ENCODE measurements at regions of chr1 and their contacts with region 1.

Region 1: GRCh38 chr1:171801487-171801891 is 20.0 kb downstream of the METTL13 start:
- DNase-seq: peak; percentile 50 to 54
- ATAC-seq: peak; percentile 75 to 77; a peak in 5 of 6 replicates
- H3K4me3 ChIP-seq: no peak overlapping the region
- H3K27ac ChIP-seq: no peak overlapping the region
- H3K4me1 ChIP-seq: no peaks in the 10 kb centered on the region
- CTCF ChIP-seq: peak; percentile 94
- EP300 ChIP-seq: no peak
- POLR2A ChIP-seq: no peak
- RAD21 ChIP-seq: peak; percentile 84 to 92

Region 2: GRCh38 chr1:171788696-171789095 is 12.8 kb before region 1 on chr1:
- CTCF ChIA-PET with region 1: interaction called, 40 read pairs
- POLR2A ChIA-PET with region 1: interaction called, 3 read pairs
- DNase-seq: no peak
- ATAC-seq: no peak
- H3K4me3 ChIP-seq: no peak overlapping the region
- H3K27ac ChIP-seq: no peak overlapping the region
- H3K4me1 ChIP-seq: no peaks in the 10 kb centered on the region
- CTCF ChIP-seq: no peak
- EP300 ChIP-seq: no peak
- POLR2A ChIP-seq: no peak
- RAD21 ChIP-seq: no peak

Region 3: DNA sequence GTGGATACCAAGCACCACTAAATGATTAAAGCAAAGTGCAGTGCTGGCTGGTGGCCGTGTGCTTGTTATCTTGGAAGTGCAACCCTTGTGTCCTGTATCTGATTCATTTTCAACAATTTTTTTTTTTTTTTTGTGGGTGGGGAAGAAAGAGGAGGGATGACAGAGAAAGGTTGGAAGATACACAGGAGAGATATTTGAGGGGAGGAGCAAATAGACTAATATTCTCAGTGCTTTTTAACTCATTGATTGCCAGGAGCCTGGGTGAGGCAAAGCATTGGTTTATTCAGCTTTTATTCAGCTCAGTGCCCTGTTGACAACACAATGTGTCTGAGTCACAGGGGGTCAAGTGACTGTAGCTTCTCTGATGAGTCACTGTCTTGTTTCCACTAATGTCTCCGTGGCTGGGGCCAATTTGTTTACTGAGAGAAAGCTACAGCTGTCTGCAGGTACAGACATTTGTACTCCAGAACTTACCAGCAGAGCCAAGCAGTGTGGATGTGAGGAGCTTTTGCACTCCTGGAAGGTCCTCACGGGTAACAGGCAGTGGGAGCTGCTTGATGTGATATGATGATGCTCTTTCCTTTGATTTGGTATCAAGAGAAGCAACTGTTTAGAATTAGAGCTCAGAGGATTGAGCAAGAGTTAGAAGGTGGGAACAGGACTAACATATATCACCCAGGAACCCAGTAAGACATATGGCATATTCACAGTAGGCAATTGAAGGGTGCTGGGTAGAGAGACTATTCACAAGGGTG is 16.2 kb after region 1 on chr1:
- CTCF ChIA-PET with region 1: interaction called, 47 read pairs
- POLR2A ChIA-PET with region 1: interaction called, 4 read pairs
- DNase-seq: peak; percentile 82 to 85
- ATAC-seq: peak; percentile 96 to 98
- H3K4me3 ChIP-seq: no peak overlapping the region
- H3K27ac ChIP-seq: peak overlapping the region; percentile 70
- H3K4me1 ChIP-seq: peaks cover 21% of the 10 kb centered on the region
- CTCF ChIP-seq: no peak
- EP300 ChIP-seq: no peak; a peak in 1 of 5 replicates
- POLR2A ChIP-seq: no peak
- RAD21 ChIP-seq: no peak

Region 4: DNA sequence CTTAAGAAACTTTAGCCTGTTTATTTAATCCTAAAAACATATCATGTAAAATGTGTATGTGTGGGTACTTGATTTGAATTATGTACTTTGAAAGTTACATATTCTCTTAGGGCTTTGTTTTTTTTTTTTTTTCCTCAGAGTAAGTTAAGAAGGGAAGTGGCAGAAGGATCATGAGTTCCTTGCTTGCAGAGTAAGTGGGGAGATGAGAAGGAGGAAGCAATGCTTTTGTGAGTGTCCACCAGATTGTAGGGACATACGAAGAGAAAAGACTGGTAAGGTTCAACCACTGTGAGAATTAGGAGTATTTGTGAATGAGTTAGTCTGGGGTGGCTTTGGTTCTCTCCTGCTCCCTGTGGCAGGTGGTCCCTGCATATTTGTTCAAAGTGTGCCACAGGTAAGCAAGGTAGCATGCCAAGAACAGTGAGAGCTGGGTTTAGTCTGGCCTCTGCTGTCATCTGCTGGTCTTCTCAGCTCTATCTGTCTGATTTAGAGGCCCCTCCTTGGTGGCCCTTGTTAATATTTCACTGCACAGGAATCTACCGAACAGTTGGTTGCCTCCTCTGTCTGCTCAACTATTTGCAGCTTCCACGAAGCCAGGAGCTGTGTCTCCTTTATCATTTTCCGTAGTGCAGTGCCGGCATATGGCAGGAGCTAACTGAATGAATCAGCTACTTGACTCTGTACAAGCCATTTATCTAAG is 49.3 kb after region 1 on chr1:
- CTCF ChIA-PET with region 1: interaction called, 12 read pairs
- POLR2A ChIA-PET with region 1: no interaction called
- DNase-seq: peak in 1 of 2 experiments; percentile 12
- ATAC-seq: peak; percentile 39 to 53; a peak in 3 of 6 replicates
- H3K4me3 ChIP-seq: no peak overlapping the region
- H3K27ac ChIP-seq: no peak overlapping the region
- H3K4me1 ChIP-seq: no peaks in the 10 kb centered on the region
- CTCF ChIP-seq: 0 out of 3 replicates have a peak, but pooled peaks have one; percentile 11
- EP300 ChIP-seq: no peak
- POLR2A ChIP-seq: no peak
- RAD21 ChIP-seq: peak; percentile 47 to 50

Region 5: GRCh38 chr1:172002725-172003345 is 201.3 kb after region 1 on chr1:
- CTCF ChIA-PET with region 1: interaction called, 19 read pairs
- POLR2A ChIA-PET with region 1: no interaction called
- DNase-seq: peak; percentile 10 to 69
- ATAC-seq: peak; percentile 66 to 68; a peak in 3 of 6 replicates
- H3K4me3 ChIP-seq: no peak overlapping the region
- H3K27ac ChIP-seq: no peak overlapping the region
- H3K4me1 ChIP-seq: peaks cover 8% of the 10 kb centered on the region; the same call in 1 of the 3 replicates
- CTCF ChIP-seq: peak; percentile 95
- EP300 ChIP-seq: no peak
- POLR2A ChIP-seq: no peak
- RAD21 ChIP-seq: peak; percentile 93

Region 6: GRCh38 chr1:172185211-172185610 is 383.7 kb after region 1 on chr1:
- CTCF ChIA-PET with region 1: no interaction called
- POLR2A ChIA-PET with region 1: no interaction called
- DNase-seq: no peak
- ATAC-seq: no peak
- H3K4me3 ChIP-seq: no peak overlapping the region
- H3K27ac ChIP-seq: no peak overlapping the region
- H3K4me1 ChIP-seq: peaks cover 18% of the 10 kb centered on the region
- CTCF ChIP-seq: no peak
- EP300 ChIP-seq: no peak
- POLR2A ChIP-seq: no peak
- RAD21 ChIP-seq: no peak

Measured in A549 (cell line).